ENCODE measurements at regions of chr11 and their contacts with region 1.

Region 1: DNA sequence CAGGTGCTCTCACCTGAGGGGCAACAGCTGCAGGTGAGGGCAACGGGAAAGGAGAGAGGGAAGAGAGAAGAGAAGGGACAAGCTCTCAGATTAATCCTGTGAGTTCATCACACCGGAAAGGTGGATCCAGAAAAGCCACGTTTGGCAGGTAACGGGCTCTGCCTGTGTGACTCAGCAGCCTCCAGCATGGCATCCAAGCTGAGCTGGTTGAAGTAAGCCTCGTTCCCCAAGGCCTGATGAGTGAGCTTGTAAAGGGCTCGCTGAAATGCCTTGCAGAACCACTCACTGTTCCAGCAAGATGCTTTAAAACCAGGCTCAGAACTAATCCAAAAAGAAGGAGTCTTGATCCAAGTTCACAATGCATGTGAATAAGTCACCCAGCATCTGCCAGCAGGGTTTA is 206.9 kb upstream of the TMEM45B start:
- DNase-seq: no peak
- ATAC-seq: no peak
- H3K4me3 ChIP-seq: no peak overlapping the region
- H3K4me3 Mint-ChIP-seq: no peak overlapping the region
- H3K27ac ChIP-seq: no peak overlapping the region
- H3K27ac Mint-ChIP-seq: no peak overlapping the region
- H3K4me1 ChIP-seq: no peaks in the 10 kb centered on the region
- H3K4me1 Mint-ChIP-seq: no peaks in the 10 kb centered on the region
- H3K27me3 ChIP-seq: no peaks in the 10 kb centered on the region
- H3K27me3 Mint-ChIP-seq: no peaks in the 10 kb centered on the region
- CTCF ChIP-seq: no peak

Region 2: DNA sequence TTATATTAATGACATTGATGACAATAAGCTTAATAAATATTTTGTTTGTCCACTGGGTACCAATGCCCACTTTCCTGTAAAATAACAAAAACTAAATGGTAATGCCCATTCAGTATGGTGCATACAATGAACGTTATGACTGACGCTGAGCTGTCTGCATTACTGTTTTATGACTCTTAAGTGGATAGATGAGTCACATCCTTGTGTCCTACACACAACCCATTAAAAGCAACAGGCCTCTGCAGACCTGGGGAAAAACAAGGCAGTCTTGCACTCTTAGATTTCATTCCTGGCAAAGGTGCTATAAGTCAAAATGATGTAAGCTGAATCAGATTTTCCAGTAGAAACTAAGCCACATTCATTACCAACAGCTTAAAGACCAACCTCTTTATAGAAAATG is 30.6 kb after region 1 on chr11:
- CTCF ChIA-PET with region 1: no interaction called
- POLR2A ChIA-PET with region 1: no interaction called
- intact Hi-C with region 1: loop called in 1 of 2 experiments (anchors 1 kb)
- DNase-seq: no peak
- ATAC-seq: no peak
- H3K4me3 ChIP-seq: no peak overlapping the region
- H3K4me3 Mint-ChIP-seq: no peak overlapping the region
- H3K27ac ChIP-seq: no peak overlapping the region
- H3K27ac Mint-ChIP-seq: no peak overlapping the region
- H3K4me1 ChIP-seq: peaks cover 5% of the 10 kb centered on the region
- H3K4me1 Mint-ChIP-seq: peaks cover 10% of the 10 kb centered on the region
- H3K27me3 ChIP-seq: no peaks in the 10 kb centered on the region
- H3K27me3 Mint-ChIP-seq: peaks cover 13% of the 10 kb centered on the region
- CTCF ChIP-seq: no peak

Region 3: DNA sequence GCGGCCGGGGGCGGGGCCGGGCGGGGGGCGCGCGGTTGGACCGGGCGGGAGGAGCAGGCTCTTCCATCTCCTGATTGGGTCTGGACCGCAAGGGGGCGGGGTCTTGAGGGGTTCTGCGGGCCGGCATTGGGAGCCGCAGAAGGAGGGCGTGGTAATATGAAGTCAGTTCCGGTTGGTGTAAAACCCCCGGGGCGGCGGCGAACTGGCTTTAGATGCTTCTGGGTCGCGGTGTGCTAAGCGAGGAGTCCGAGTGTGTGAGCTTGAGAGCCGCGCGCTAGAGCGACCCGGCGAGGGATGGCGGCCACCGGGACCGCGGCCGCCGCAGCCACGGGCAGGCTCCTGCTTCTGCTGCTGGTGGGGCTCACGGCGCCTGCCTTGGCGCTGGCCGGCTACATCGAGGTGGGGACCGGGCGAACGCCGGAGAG is 461.0 kb after region 1 on chr11 and contains the start of gene APLP2:
- CTCF ChIA-PET with region 1: no interaction called
- POLR2A ChIA-PET with region 1: no interaction called
- intact Hi-C with region 1: no loop called
- DNase-seq: peak; percentile 92 to 99 (median 97)
- ATAC-seq: peak; percentile 92
- H3K4me3 ChIP-seq: peak within 1 kb of the TSS; percentile 64
- H3K4me3 Mint-ChIP-seq: peak within 1 kb of the TSS; percentile 99
- H3K27ac ChIP-seq: peak within 1 kb of the TSS; percentile 58 to 78
- H3K27ac Mint-ChIP-seq: peak within 1 kb of the TSS; percentile 92
- H3K4me1 ChIP-seq: peaks cover 20% of the 10 kb centered on the region
- H3K4me1 Mint-ChIP-seq: peaks cover 27% of the 10 kb centered on the region
- H3K27me3 ChIP-seq: no peaks in the 10 kb centered on the region
- H3K27me3 Mint-ChIP-seq: peaks cover 4% of the 10 kb centered on the region
- CTCF ChIP-seq: no peak
- total RNA-seq, gene APLP2: 28.8 to 29.5 TPM

Measured in CD4-positive, alpha-beta T cell (primary cell).